Heart left ventricle (tissue), 16 donors: ENCODE measurements at regions of chr12 and their contacts with region 1.

Region 1: GRCh38 chr12:20376984-20377383 is 8.6 kb downstream of the PDE3A start:
- DNase-seq: no peak
- ATAC-seq: peak in 2 of 4 donors; percentile 27 to 36
- H3K4me3 ChIP-seq: peak overlapping the region in 8 of 12 donors; percentile 7 to 88 (median 78)
- H3K27ac ChIP-seq: peak overlapping the region in 11 of 12 donors; percentile 1 to 98 (median 95)
- H3K4me1 ChIP-seq: peaks cover 0 to 42% (median 15%) of the 10 kb centered on the region in 12 donors
- H3K27me3 ChIP-seq: no peaks in the 10 kb centered on the region
- CTCF ChIP-seq: peak in 9 of 12 donors; percentile 23 to 53 (median 42)
- POLR2A ChIP-seq: no peak

Region 2: DNA sequence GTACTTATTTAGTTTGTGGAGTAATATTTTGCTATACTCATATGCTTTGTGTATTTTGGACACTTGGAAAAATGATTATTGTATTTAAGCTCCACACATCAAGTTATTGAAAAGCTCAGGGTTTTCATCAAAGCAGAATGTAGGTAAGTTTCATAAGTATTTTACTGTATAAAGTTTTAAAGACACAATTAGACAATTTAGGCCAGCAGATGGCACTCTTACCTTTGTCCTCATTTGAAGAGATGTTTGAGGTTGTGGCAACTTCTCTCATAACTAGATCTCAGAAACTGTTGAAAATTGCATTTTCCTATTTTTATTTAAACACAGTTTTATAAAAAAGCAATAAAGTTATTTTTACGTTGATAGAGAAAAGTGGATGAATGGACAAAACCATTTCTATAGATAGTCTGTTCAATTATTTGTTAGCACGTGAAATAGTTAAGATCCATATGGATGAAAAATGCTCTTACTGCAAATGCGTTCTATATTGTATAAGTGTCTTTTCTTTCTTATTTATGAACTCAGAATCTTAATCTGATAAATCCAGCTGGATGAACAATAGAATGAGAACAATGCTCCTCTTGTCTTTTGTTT is 637.7 kb before region 1 on chr12:
- intact Hi-C with region 1: loop called in 3 of 10 experiments (anchors 5 to 10 kb)
- DNase-seq: peak in 2 of 5 donors; percentile 39 to 40
- ATAC-seq: peak in 2 of 4 donors; percentile 61
- H3K4me3 ChIP-seq: no peak overlapping the region
- H3K27ac ChIP-seq: peak overlapping the region in 1 of 12 donors; percentile 7
- H3K4me1 ChIP-seq: peaks cover 0 to 25% (median 16%) of the 10 kb centered on the region in 12 donors
- H3K27me3 ChIP-seq: no peaks in the 10 kb centered on the region
- CTCF ChIP-seq: peak; percentile 39 to 79 (median 68)
- POLR2A ChIP-seq: no peak

Region 3: DNA sequence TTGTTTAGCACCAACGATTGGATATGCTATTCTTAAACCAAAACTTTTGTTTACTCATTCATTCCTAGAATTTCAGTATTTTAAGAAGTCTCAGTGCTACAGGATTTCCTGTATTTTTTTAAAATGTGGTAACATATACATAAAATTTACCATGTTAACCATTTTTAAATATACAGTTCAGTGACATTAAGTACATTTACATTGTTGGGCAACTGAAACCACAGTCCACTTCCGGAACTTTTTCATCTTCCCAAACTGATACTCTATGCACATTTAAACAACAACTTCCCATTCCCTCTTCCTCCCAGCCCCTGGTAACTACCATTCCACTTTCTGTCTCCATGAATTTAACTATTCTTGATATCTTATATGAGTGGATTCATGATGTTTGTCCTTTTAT is 21.7 kb after region 1 on chr12:
- intact Hi-C with region 1: loop called in 1 of 10 experiments (anchors 2 kb)
- DNase-seq: no peak
- ATAC-seq: no peak
- H3K4me3 ChIP-seq: no peak overlapping the region
- H3K27ac ChIP-seq: peak overlapping the region in 9 of 12 donors; percentile 8 to 83 (median 73)
- H3K4me1 ChIP-seq: peaks cover 0 to 44% (median 22%) of the 10 kb centered on the region in 12 donors
- H3K27me3 ChIP-seq: no peaks in the 10 kb centered on the region
- CTCF ChIP-seq: no peak
- POLR2A ChIP-seq: no peak

Region 4: DNA sequence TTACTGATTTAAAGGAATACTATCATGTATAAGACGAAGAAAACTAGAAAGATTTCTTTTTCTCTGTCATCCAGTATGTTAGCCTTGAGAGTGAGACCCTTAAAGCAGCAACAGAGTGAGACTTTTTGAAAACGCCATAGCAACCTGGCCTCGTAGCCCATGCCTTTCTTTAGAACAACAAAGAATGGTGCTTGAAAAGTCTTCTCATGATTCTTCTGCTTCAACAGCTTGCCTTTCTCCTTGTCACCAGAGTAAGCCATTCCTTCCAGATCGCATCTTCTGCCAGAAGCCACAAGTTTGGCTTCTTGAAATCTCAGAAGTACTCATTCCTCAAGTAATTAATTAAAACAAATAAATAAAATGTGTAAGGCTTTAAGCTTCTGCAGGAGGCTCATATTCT is 100.7 kb after region 1 on chr12:
- intact Hi-C with region 1: no loop called
- DNase-seq: no peak
- ATAC-seq: peak in 3 of 4 donors; percentile 27 to 34 (median 29)
- H3K4me3 ChIP-seq: peak overlapping the region in 3 of 12 donors; percentile 3 to 15 (median 6)
- H3K27ac ChIP-seq: peak overlapping the region in 4 of 12 donors; percentile 12 to 41 (median 36)
- H3K4me1 ChIP-seq: peaks cover 0 to 74% (median 26%) of the 10 kb centered on the region in 12 donors
- H3K27me3 ChIP-seq: no peaks in the 10 kb centered on the region
- CTCF ChIP-seq: no peak
- POLR2A ChIP-seq: no peak